MCF 10A (cell line): ENCODE measurements at regions of chr14 and their contacts with region 1.

Region 1: GRCh38 chr14:91363776-91364523 is 53.7 kb downstream of the CCDC88C start:
- DNase-seq: no peak
- H3K4me3 Mint-ChIP-seq: no peak overlapping the region
- H3K27ac Mint-ChIP-seq: no peak overlapping the region
- H3K4me1 Mint-ChIP-seq: peaks cover 39% of the 10 kb centered on the region
- H3K27me3 Mint-ChIP-seq: no peaks in the 10 kb centered on the region
- CTCF ChIP-seq: no peak

Region 2: GRCh38 chr14:91350813-91351511 is 13.0 kb before region 1 on chr14:
- CTCF ChIA-PET with region 1: interaction called, 6 read pairs
- POLR2A ChIA-PET with region 1: interaction called, 23 read pairs
- intact Hi-C with region 1: no loop called
- DNase-seq: no peak
- H3K4me3 Mint-ChIP-seq: no peak overlapping the region
- H3K27ac Mint-ChIP-seq: no peak overlapping the region
- H3K4me1 Mint-ChIP-seq: peaks cover 12% of the 10 kb centered on the region
- H3K27me3 Mint-ChIP-seq: no peaks in the 10 kb centered on the region
- CTCF ChIP-seq: no peak

Region 3: DNA sequence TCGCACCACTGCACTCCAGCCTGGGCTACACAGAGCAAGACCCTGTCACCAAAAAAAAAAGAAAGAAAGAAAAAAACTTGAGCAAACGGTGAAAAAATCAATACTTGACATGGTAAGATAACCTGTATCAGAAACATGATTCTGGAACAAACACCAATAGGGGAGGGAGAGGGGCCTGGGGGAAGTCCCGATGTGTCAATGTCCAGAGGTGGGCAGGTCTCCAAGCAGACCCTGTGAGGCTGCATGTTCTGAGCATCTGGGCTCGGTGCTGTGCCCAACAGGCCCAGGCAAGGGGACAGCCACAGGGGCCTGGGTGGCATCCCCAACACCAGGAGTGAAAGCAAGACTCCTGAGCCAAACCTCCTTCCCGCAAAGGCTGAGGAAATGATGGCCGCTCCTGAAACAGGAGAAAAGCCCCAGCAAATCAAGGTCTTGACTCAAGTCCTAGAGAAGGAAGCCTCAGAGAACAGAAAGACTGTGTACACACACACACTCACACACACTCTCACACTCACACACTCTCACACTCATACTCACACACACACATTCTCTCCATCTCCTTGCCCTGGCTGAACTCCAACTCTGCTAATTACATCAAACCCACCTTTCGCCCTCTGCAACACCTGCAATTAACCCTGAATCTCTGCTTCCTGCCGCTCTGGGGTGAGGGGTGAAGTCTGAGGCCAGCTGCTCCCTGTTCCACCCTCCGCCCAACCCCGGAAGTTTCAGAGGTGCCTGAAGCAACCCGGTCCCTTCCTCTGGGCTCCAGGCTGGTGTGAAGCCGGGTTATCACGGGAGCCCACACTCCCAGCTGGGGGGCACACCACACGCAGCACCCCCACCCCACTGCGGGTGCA is 33.2 kb after region 1 on chr14:
- CTCF ChIA-PET with region 1: interaction called, 8 read pairs
- POLR2A ChIA-PET with region 1: interaction called, 20 read pairs
- intact Hi-C with region 1: no loop called
- DNase-seq: peak; percentile 13
- H3K4me3 Mint-ChIP-seq: peak overlapping the region; percentile 47
- H3K27ac Mint-ChIP-seq: peak overlapping the region; percentile 99
- H3K4me1 Mint-ChIP-seq: peaks cover 36% of the 10 kb centered on the region
- H3K27me3 Mint-ChIP-seq: no peaks in the 10 kb centered on the region
- CTCF ChIP-seq: no peak